Activated CD8-positive, alpha-beta memory T cell treated with anti-CD3 and anti-CD28 coated beads, Interleukin-2, amount 10 ng/mL, durations not matched to agents 7 days and 5 days (primary cell): ENCODE measurements at regions of chr17 and their contacts with region 1.

Region 1: DNA sequence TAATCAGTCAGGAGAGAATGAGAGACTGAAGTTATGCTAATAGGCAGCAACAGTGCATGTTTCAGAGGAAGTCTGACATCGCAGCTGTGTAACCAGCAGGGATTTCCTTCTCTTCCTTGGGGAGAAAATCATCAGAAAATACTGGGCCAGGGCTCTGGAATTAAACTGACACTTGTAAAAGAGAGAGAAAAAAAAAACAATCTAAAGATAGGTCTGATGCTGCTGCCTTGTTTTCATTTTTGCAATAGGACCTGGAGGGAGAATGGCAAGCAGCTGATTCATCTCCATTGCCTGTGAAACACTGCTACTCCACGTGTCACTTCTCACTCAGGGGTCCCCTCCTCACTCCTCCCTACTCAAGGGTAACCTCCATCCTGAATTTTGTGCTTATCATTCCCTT is 17.7 kb upstream of the CORO6 start:
- DNase-seq: no peak
- ATAC-seq: no peak
- H3K4me3 Mint-ChIP-seq: no peak overlapping the region
- H3K27ac Mint-ChIP-seq: peak overlapping the region; percentile 42
- H3K4me1 Mint-ChIP-seq: peaks cover 21% of the 10 kb centered on the region
- H3K27me3 Mint-ChIP-seq: no peaks in the 10 kb centered on the region

Region 2: DNA sequence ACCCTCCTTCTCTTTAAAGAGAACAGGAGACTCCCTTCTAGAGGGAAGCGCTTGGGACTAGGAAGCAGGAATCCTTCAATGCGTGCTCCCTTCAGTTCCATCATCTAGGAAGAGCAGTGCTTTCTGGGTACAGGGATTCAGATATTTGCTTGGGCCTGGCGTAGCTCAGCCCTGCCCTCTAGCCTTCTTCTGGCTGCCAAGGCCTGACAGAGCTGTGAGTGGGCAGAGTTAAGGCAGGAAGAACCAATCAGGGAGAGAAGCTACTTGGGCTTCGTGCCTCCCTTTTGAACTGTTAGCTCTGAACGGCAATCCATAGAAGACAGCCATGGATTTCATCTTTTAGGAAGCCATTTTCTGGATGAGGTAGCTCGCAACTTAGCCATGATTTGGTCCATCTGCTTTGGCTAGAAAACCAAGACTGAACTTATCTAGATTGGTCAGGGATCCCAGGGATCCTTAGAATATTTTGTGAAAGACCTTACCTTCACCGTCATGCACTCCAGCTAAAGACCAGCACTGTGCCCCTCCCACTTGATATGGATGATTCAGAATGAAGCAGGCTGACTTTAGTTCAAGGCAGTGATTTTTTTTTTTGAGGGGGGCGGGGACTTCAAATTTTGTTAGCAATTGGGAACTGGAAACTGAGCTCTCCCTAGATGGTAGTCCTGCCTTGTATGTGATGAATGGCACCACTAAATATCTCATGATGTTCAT is 15.2 kb before region 1 on chr17:
- CTCF ChIA-PET with region 1: interaction called, 40 read pairs
- DNase-seq: no peak
- ATAC-seq: no peak
- H3K4me3 Mint-ChIP-seq: no peak overlapping the region
- H3K27ac Mint-ChIP-seq: no peak overlapping the region
- H3K4me1 Mint-ChIP-seq: peaks cover 55% of the 10 kb centered on the region
- H3K27me3 Mint-ChIP-seq: peaks cover 9% of the 10 kb centered on the region